Activated naive CD4-positive, alpha-beta T cell treated with anti-CD3 and anti-CD28 coated beads for 36 hours (primary cell): ENCODE measurements at regions of chrX and their contacts with region 1.

Region 1: DNA sequence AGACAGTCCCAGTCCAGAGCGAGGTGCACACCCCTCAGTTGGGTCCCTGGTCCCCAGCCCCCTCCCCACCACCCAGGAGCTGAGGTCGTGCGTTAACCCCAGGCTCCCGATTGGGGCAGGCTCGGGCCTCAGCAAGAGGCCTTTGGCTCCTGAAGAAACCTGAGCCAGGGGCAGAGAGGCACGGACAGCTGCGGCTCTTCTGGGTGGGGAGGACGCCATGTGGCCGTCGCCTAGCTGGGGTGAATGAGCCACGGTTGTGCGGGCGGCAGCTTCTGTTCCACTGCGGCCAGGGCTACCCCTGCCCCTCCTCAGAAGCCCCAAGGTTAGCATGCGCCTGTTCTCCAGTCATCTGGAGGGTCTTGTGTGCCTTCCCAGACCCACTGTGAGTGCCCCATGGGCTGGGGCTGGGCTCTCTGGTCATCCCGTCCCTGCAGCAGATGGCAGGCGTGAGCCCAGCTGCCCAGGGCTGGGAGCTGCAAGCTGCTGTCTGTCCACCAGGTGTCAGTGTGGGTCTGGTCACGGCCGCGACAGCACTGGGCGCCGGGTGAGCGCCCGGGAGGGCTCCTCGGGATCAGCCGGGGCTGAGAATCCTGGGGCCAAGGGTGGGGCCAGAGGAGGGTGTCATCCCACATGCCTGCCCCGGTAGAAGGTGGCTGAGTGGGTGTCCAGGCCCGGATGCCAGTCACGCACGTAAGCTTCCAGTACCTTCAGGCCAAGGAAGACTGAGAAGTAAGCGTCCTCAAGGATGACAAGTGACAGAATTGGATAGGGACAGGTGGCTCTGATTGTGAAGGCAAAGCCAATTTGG is 21.9 kb downstream of the ATP2B3 start:
- DNase-seq: peak; percentile 71
- H3K4me3 Mint-ChIP-seq: no peak overlapping the region
- H3K27ac Mint-ChIP-seq: no peak overlapping the region
- H3K4me1 Mint-ChIP-seq: no peaks in the 10 kb centered on the region
- H3K27me3 Mint-ChIP-seq: no peaks in the 10 kb centered on the region

Region 2: GRCh38 chrX:153649178-153649914 is 110.0 kb after region 1 on chrX:
- CTCF ChIA-PET with region 1: interaction called, 12 read pairs
- intact Hi-C with region 1: loop called (anchors 1 kb)
- DNase-seq: peak; percentile 49
- H3K4me3 Mint-ChIP-seq: no peak overlapping the region
- H3K27ac Mint-ChIP-seq: no peak overlapping the region
- H3K4me1 Mint-ChIP-seq: peaks cover 2% of the 10 kb centered on the region
- H3K27me3 Mint-ChIP-seq: peaks cover 24% of the 10 kb centered on the region

Region 3: GRCh38 chrX:153667956-153668396 is 128.6 kb after region 1 on chrX:
- CTCF ChIA-PET with region 1: interaction called, 49 read pairs
- intact Hi-C with region 1: loop called (anchors 2 kb)
- DNase-seq: peak; percentile 86
- H3K4me3 Mint-ChIP-seq: peak overlapping the region; percentile 70
- H3K27ac Mint-ChIP-seq: no peak overlapping the region
- H3K4me1 Mint-ChIP-seq: peaks cover 8% of the 10 kb centered on the region
- H3K27me3 Mint-ChIP-seq: peaks cover 8% of the 10 kb centered on the region